Lower leg skin (tissue), 4 donors: ENCODE measurements at regions of chr4 and their contacts with region 1.

Region 1: GRCh38 chr4:145755802-145756201 is 75.9 kb downstream of the C4orf51 start:
- DNase-seq: no peak
- H3K4me3 ChIP-seq: no peak overlapping the region
- CTCF ChIP-seq: no peak
- POLR2A ChIP-seq: no peak

Region 2: DNA sequence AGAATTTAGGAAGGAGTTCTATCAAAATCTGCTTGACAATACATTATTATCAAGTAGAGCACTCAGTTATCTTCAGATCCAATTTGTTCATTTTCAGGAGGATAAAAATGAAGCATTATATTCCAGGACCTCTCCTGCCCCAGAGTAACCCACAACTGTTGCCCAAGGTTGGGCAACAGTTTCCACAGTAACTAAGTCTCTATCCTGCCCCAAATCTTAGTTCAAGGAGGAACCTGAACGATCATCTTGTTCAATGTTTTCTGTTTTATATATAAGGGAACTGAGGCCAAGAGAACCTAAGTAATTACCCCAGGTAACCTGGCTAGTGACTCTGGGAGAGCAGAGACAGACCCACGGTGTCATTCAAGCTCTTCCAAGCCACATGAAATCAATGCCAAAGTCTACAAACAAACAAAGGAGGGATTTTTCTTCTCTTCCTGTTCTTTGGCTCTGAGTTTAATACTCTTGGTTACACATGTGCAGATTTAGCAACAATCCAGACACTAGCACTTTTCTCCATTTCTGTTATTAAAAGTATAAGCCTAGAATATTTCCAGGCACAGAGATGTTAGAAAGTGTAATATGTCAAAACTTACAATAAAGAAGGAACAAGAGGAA is 29.7 kb after region 1 on chr4:
- intact Hi-C with region 1: loop called (anchors 2 kb)
- DNase-seq: no peak
- H3K4me3 ChIP-seq: no peak overlapping the region
- CTCF ChIP-seq: no peak
- POLR2A ChIP-seq: no peak